Naive thymus-derived CD4-positive, alpha-beta T cell (primary cell): ENCODE measurements at regions of chr19 and their contacts with region 1.

Region 1: DNA sequence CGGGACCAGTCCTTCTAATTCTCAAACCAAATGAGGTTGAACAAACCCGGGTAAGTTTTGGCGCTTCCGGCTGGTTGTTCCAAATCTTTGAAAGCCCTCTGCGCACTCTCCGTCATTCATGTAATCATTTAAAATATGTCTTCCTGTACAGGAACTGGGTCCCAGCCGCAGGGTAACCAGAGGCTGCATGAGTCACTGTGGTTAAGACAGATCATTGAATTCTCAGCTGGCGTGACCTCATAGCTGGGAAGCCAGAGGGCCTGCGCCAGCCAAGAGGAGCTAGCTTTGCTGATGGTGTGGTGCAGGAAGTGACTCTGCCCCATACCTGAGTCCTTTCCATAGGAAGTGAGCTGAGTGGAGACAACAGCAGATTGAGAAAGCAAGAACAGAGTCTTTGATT is 135.2 kb downstream of the TSHZ3 start:
- DNase-seq: peak; percentile 35 to 91 (median 84)
- ATAC-seq: peak; percentile 98
- H3K4me3 ChIP-seq: peak overlapping the region; percentile 14
- H3K4me3 Mint-ChIP-seq: peak overlapping the region; percentile 57 to 83 (median 74)
- H3K27ac ChIP-seq: peak overlapping the region; percentile 11
- H3K27ac Mint-ChIP-seq: peak overlapping the region; percentile 81 to 96 (median 91)
- H3K4me1 ChIP-seq: peaks cover 7 to 9% of the 10 kb centered on the region in 2 donors
- H3K4me1 Mint-ChIP-seq: peaks cover 13 to 26% (median 23%) of the 10 kb centered on the region in 7 donors
- H3K27me3 ChIP-seq: no peaks in the 10 kb centered on the region
- H3K27me3 Mint-ChIP-seq: no peaks in the 10 kb centered on the region

Region 2: DNA sequence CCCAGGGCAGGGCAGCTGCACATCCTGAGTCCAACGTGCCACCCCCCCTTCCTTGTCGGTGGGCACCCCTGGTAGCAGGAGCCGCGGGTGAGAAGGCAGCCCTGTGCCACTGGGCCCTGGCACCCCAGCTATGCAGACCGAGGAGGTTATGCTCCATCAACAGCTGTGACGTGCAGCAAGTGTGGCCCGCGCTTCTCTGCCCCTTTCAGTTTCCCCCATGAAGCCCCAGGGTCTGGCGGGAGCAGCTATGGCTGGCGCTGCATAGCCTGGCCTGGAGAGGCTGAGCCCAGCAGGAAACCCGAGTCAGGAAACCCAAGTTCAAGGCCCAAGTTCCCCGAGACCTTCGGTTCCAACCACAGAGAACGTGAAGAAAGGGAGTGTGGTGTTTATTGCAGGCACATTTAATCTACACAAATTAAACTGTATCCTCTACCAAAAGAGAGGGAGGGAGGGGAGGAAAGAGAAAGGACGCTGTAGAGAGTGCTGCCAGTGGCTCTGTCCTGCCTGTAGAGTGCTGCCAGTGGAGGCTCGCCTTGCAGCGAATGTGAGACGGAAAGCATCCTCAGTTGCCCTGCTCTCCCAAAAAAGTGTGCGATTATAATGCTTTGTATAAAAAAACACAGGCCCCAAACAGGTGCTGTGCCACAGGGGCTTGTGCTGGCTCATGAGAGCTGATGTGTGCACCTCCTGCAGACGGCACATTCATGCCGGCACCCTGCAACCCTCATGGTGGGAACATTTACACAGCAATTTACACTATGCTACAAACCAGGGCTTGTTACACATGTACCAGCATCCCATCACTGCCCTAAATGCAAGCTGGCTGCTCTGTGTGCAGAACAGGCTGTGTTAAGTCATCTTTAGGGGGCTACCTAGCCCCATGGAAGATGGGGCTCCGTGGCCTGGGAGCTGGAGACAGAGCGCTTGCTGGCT is 1591.7 kb before region 1 on chr19:
- CTCF ChIA-PET with region 1: no interaction called
- POLR2A ChIA-PET with region 1: no interaction called
- intact Hi-C with region 1: loop called in 1 of 2 experiments (anchors 10 kb)
- DNase-seq: peak in 6 of 9 donors; percentile 4 to 32 (median 25)
- ATAC-seq: peak; percentile 70
- H3K4me3 ChIP-seq: peak overlapping the region; percentile 21
- H3K4me3 Mint-ChIP-seq: peak overlapping the region; percentile 1 to 85 (median 70)
- H3K27ac ChIP-seq: no peak overlapping the region
- H3K27ac Mint-ChIP-seq: peak overlapping the region; percentile 13 to 87 (median 76)
- H3K4me1 ChIP-seq: peaks cover 28 to 58% of the 10 kb centered on the region in 2 donors
- H3K4me1 Mint-ChIP-seq: peaks cover 37 to 53% (median 45%) of the 10 kb centered on the region in 7 donors
- H3K27me3 ChIP-seq: no peaks in the 10 kb centered on the region
- H3K27me3 Mint-ChIP-seq: peaks cover 0 to 3% (median 0%) of the 10 kb centered on the region in 5 donors

Region 3: DNA sequence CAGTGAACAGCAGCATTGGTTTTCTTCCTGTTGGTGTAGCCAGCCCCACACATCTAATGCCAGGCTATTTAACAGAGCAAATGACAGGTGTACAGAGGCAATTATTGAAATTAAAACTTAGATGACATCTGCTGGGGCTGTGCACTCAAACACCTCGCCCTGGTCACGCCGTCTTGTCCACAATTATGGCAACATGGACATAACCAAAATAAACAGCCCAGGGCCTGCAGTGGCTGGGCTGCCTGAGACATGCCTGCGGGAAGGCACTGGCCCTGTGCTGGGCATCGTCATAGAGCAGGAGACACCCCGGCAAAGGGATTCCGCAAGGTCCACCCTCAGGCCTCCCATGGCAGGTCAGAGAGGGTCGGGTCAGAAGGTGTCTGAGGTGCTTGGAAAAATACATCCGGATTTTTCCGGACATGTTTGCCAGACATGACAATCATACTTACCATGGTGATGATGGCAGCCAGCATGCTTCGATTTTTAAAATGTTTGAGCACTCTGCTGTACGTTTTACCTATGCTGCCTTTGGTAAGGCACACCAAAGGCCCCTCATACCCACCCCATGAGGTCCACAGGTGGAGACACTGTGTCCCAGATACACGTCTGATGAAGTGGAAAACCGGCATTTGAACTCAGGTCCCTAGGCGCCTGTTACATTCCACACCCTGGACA is 87.4 kb after region 1 on chr19:
- CTCF ChIA-PET with region 1: no interaction called
- POLR2A ChIA-PET with region 1: no interaction called
- intact Hi-C with region 1: no loop called
- DNase-seq: no peak
- ATAC-seq: no peak
- H3K4me3 ChIP-seq: no peak overlapping the region
- H3K4me3 Mint-ChIP-seq: no peak overlapping the region
- H3K27ac ChIP-seq: no peak overlapping the region
- H3K27ac Mint-ChIP-seq: no peak overlapping the region
- H3K4me1 ChIP-seq: no peaks in the 10 kb centered on the region
- H3K4me1 Mint-ChIP-seq: peaks cover 0 to 2% (median 0%) of the 10 kb centered on the region in 7 donors
- H3K27me3 ChIP-seq: no peaks in the 10 kb centered on the region
- H3K27me3 Mint-ChIP-seq: peaks cover 0 to 5% (median 0%) of the 10 kb centered on the region in 5 donors

Region 4: GRCh38 chr19:31340042-31341025 is 126.2 kb after region 1 on chr19:
- CTCF ChIA-PET with region 1: no interaction called
- POLR2A ChIA-PET with region 1: no interaction called
- intact Hi-C with region 1: loop called (anchors 1 to 5 kb)
- DNase-seq: peak in 6 of 9 donors; percentile 39 to 47 (median 45)
- ATAC-seq: peak; percentile 68
- H3K4me3 ChIP-seq: peak overlapping the region; percentile 39
- H3K4me3 Mint-ChIP-seq: peak overlapping the region; percentile 52 to 86 (median 74)
- H3K27ac ChIP-seq: no peak overlapping the region
- H3K27ac Mint-ChIP-seq: peak overlapping the region; percentile 44 to 89 (median 78)
- H3K4me1 ChIP-seq: peaks cover 22 to 24% of the 10 kb centered on the region in 2 donors
- H3K4me1 Mint-ChIP-seq: peaks cover 21 to 43% (median 37%) of the 10 kb centered on the region in 7 donors
- H3K27me3 ChIP-seq: peaks cover 1 to 3% of the 10 kb centered on the region in 2 donors
- H3K27me3 Mint-ChIP-seq: peaks cover 0 to 64% (median 10%) of the 10 kb centered on the region in 5 donors